ENCODE measurements at regions of chr11 and their contacts with region 1.

Region 1: GRCh38 chr11:117075186-117075585 is 23.0 kb downstream of the SIK3 start:
- DNase-seq: no peak
- H3K4me3 ChIP-seq: no peak overlapping the region
- H3K27ac ChIP-seq: no peak overlapping the region
- H3K4me1 ChIP-seq: peaks cover 0 to 11% (median 3%) of the 10 kb centered on the region in 4 experiments; a peak in 6 of 7 replicates
- H3K27me3 ChIP-seq: no peaks in the 10 kb centered on the region
- CTCF ChIP-seq: no peak
- EP300 ChIP-seq: no peak
- POLR2A ChIP-seq: no peak
- RAD21 ChIP-seq: no peak

Region 2: DNA sequence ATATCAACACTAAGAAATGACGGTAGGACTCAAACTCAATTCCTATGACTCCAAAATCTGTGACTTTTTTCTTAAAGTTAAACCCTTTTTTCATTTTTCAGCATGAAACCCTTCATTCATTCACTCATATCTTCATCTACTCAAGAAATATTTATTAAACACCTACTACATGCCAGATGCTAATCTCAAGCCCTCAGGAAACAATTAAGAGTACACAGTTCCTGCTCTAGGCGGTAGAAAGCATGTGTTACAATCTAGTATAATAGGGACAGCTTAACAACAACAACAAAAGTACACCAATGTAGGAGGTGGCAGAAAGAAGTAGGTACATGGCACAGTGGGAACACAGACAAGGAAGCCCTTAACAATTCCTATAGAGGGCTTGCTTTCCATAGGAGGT is 47.0 kb before region 1 on chr11:
- CTCF ChIA-PET with region 1: no interaction called
- POLR2A ChIA-PET with region 1: no interaction called
- DNase-seq: no peak
- H3K4me3 ChIP-seq: no peak overlapping the region
- H3K27ac ChIP-seq: no peak overlapping the region
- H3K4me1 ChIP-seq: no peaks in the 10 kb centered on the region
- H3K27me3 ChIP-seq: no peaks in the 10 kb centered on the region
- CTCF ChIP-seq: no peak
- EP300 ChIP-seq: no peak
- POLR2A ChIP-seq: no peak
- RAD21 ChIP-seq: no peak

Region 3: DNA sequence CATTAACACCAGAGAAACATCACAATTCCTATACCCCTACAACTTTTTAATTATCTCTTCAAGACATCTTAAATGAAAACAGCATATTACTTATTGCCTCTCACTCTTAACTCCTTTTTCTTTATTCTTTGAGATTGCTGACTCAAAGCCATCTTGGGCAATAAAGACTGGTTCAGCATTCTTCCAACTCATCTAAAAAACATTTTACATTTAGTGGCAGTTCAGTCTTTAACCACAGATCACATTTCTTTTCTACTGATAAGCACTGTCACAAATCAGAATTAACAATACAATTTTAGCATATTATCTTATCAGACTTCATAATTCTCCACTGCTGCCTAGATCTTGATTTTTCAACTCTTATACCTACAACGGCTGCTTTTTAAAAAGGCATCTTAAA is 10.9 kb before region 1 on chr11:
- CTCF ChIA-PET with region 1: interaction called, 10 read pairs
- POLR2A ChIA-PET with region 1: interaction called, 3 read pairs
- DNase-seq: no peak
- H3K4me3 ChIP-seq: no peak overlapping the region
- H3K27ac ChIP-seq: no peak overlapping the region
- H3K4me1 ChIP-seq: peaks cover 0 to 3% (median 0%) of the 10 kb centered on the region in 4 experiments; a peak in 1 of 7 replicates
- H3K27me3 ChIP-seq: no peaks in the 10 kb centered on the region
- CTCF ChIP-seq: no peak
- EP300 ChIP-seq: no peak
- POLR2A ChIP-seq: no peak
- RAD21 ChIP-seq: no peak

Region 4: DNA sequence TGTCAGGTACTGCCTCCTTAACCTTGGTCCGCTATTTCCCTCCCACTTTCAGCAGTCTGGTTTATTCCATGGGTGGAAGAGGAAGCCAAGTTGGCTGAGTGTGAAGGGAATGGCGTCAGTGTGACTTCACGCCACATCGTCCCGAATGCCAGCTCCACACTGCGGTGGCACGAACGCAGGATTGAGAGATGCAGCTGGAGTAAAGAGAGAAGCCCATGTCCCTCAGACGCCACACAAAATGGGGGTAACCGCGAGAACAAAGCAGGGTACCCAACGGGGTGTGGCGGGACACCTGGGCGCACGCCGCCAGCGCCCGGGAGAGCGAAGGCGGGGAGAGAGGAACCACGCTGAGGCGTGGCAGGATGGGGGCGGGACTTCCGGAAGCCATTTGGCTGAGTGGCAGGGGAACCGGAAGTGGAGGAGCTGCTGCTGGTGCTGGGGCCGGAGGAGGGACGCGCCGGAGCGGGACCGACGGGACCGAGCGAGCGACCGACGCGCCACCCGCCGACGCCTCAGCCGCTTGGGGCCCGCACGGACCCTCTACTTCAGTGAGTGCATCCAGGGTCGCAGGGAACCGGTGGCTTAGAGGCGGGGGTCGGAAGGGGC is 68.8 kb after region 1 on chr11 and contains the start of gene PAFAH1B2:
- CTCF ChIA-PET with region 1: no interaction called
- POLR2A ChIA-PET with region 1: no interaction called
- DNase-seq: peak; percentile 76 to 97
- H3K4me3 ChIP-seq: peak within 1 kb of the TSS; percentile 88 to 99 (median 92)
- H3K27ac ChIP-seq: peak within 1 kb of the TSS; percentile 92
- H3K4me1 ChIP-seq: peaks cover 0 to 11% (median 6%) of the 10 kb centered on the region in 4 experiments; a peak in 5 of 7 replicates
- H3K27me3 ChIP-seq: no peaks in the 10 kb centered on the region
- CTCF ChIP-seq: no peak
- EP300 ChIP-seq: no peak
- POLR2A ChIP-seq: peak in 1 of 2 experiments; percentile 82; a peak in 1 of 3 replicates
- RAD21 ChIP-seq: no peak
- total RNA-seq, gene PAFAH1B2: 151 and 161 TPM in 2 replicates